CD8-positive, alpha-beta memory T cell (primary cell): ENCODE measurements at regions of chr3 and their contacts with region 1.

Region 1: GRCh38 chr3:33063651-33064051 is 33.3 kb downstream of the GLB1 start:
- DNase-seq: peak in 4 of 5 donors; percentile 14 to 68 (median 35)
- H3K4me3 ChIP-seq: no peak overlapping the region
- H3K4me3 Mint-ChIP-seq: peak overlapping the region; percentile 35 to 61 (median 45)
- H3K27ac ChIP-seq: no peak overlapping the region
- H3K27ac Mint-ChIP-seq: peak overlapping the region; percentile 68 to 94 (median 91)
- H3K4me1 ChIP-seq: peaks cover 56% of the 10 kb centered on the region
- H3K4me1 Mint-ChIP-seq: peaks cover 40 to 76% (median 73%) of the 10 kb centered on the region in 3 donors
- H3K27me3 ChIP-seq: no peaks in the 10 kb centered on the region
- H3K27me3 Mint-ChIP-seq: no peaks in the 10 kb centered on the region

Region 2: GRCh38 chr3:32947789-32948238 is 115.8 kb before region 1 on chr3:
- CTCF ChIA-PET with region 1: interaction called, 24 read pairs
- POLR2A ChIA-PET with region 1: no interaction called
- DNase-seq: peak; percentile 69 to 90 (median 83)
- H3K4me3 ChIP-seq: no peak overlapping the region
- H3K4me3 Mint-ChIP-seq: peak overlapping the region in 1 of 7 donors; percentile 57
- H3K27ac ChIP-seq: no peak overlapping the region
- H3K27ac Mint-ChIP-seq: peak overlapping the region in 3 of 8 donors; percentile 23 to 38 (median 32)
- H3K4me1 ChIP-seq: peaks cover 21% of the 10 kb centered on the region
- H3K4me1 Mint-ChIP-seq: peaks cover 21 to 47% (median 46%) of the 10 kb centered on the region in 3 donors
- H3K27me3 ChIP-seq: no peaks in the 10 kb centered on the region
- H3K27me3 Mint-ChIP-seq: no peaks in the 10 kb centered on the region

Region 3: GRCh38 chr3:33047842-33048834 is 15.5 kb before region 1 on chr3:
- CTCF ChIA-PET with region 1: interaction called, 60 read pairs
- POLR2A ChIA-PET with region 1: interaction called, 8 read pairs
- DNase-seq: peak; percentile 31 to 84 (median 80)
- H3K4me3 ChIP-seq: peak overlapping the region; percentile 19
- H3K4me3 Mint-ChIP-seq: peak overlapping the region; percentile 62 to 87 (median 82)
- H3K27ac ChIP-seq: no peak overlapping the region
- H3K27ac Mint-ChIP-seq: peak overlapping the region; percentile 86 to 98 (median 96)
- H3K4me1 ChIP-seq: peaks cover 73% of the 10 kb centered on the region
- H3K4me1 Mint-ChIP-seq: peaks cover 68 to 91% (median 88%) of the 10 kb centered on the region in 3 donors
- H3K27me3 ChIP-seq: no peaks in the 10 kb centered on the region
- H3K27me3 Mint-ChIP-seq: no peaks in the 10 kb centered on the region

Region 4: DNA sequence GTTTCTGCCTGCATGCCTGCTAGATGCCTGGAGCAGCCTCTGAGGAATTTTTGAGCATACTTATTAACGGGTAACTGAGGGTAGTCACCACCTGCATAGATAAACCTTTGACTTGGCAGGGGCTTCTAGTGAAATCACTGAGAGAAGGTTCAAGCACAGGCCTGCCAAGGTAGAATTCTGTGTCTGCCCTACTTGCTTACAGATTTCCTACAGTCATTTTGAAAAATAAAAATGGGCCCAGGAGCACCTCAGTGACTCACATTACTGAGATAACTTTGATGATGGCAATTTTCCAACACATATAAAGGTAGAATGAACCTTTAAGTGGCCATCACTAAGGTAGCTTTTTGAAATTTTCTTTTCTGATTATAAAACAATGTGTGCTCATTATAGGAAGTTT is 61.0 kb after region 1 on chr3:
- CTCF ChIA-PET with region 1: no interaction called
- POLR2A ChIA-PET with region 1: interaction called, 10 read pairs
- DNase-seq: no peak
- H3K4me3 ChIP-seq: no peak overlapping the region
- H3K4me3 Mint-ChIP-seq: no peak overlapping the region
- H3K27ac ChIP-seq: no peak overlapping the region
- H3K27ac Mint-ChIP-seq: peak overlapping the region in 1 of 8 donors; percentile 37
- H3K4me1 ChIP-seq: no peaks in the 10 kb centered on the region
- H3K4me1 Mint-ChIP-seq: peaks cover 0 to under 1% (median 0%) of the 10 kb centered on the region in 3 donors
- H3K27me3 ChIP-seq: no peaks in the 10 kb centered on the region
- H3K27me3 Mint-ChIP-seq: no peaks in the 10 kb centered on the region